Aorta (tissue), 5 donors: ENCODE measurements at regions of chr15 and their contacts with region 1.

Region 1: DNA sequence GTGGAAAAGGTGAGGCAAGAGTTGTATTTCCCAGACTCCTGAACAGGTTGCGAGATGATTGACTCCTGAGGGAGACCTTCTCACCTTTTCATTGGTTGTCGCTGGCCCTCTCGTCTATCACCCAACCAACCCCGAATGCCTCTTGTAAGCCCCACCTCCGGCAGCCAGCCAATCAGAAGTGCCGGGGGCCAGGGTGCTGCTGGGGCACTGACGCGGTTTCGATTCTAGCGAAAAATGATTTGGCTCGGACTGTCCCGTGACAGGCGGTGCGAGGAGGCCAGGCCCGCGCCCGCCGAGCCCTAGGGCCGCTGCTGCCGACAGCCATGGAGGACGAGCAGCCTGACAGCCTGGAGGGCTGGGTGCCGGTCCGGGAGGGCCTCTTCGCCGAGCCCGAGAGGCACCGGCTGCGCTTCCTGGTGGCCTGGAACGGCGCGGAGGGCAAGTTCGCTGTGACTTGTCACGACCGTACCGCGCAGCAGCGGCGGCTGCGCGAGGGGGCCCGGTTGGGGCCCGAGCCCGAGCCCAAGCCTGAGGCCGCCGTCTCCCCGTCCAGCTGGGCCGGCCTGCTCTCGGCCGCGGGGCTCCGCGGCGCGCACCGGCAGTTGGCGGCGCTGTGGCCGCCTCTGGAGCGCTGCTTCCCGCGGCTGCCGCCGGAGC is at the start of gene WHAMM:
- DNase-seq: peak; percentile 99
- ATAC-seq: peak; percentile 100
- H3K4me3 ChIP-seq: peak within 1 kb of the TSS; percentile 63 to 91
- H3K27ac ChIP-seq: peak within 1 kb of the TSS; percentile 95
- H3K4me1 ChIP-seq: peaks cover 0 to 3% of the 10 kb centered on the region in 2 donors
- H3K27me3 ChIP-seq: no peaks in the 10 kb centered on the region
- total RNA-seq, gene WHAMM: 11.5 to 11.8 TPM

Region 2: GRCh38 chr15:82749951-82750830 is 59.3 kb before region 1 on chr15:
- intact Hi-C with region 1: loop called (anchors 5 kb)
- DNase-seq: peak; percentile 94 to 97
- ATAC-seq: peak; percentile 96
- H3K4me3 ChIP-seq: peak overlapping the region; percentile 69
- H3K27ac ChIP-seq: peak overlapping the region; percentile 46 to 85
- H3K4me1 ChIP-seq: peaks cover 2 to 8% of the 10 kb centered on the region in 2 donors
- H3K27me3 ChIP-seq: no peaks in the 10 kb centered on the region

Region 3: GRCh38 chr15:82763361-82764116 is 46.0 kb before region 1 on chr15:
- intact Hi-C with region 1: loop called in 1 of 2 experiments (anchors 2 kb)
- DNase-seq: no peak
- ATAC-seq: no peak
- H3K4me3 ChIP-seq: no peak overlapping the region
- H3K27ac ChIP-seq: no peak overlapping the region
- H3K4me1 ChIP-seq: no peaks in the 10 kb centered on the region
- H3K27me3 ChIP-seq: no peaks in the 10 kb centered on the region